ENCODE measurements at regions of chr10 and their contacts with region 1.

Region 1: DNA sequence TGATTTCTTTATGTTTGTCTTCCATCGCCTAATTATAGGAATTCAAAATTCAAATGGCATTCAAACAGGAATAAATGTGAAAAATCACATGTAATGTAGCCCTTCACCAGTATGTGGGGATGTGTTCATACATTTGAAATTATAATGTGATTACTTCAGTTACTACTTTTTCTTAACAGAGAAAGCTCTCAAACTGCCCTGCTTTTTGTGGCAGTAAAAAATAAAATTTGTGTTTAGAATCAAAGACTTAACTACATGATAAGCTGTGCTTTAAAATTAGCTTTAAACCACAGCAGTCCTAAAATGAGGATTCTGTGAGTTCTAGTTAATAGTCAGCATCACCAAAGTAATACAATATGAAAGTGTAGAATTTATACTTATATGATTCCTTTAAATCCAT is 7.8 kb upstream of the HERC4 start:
- DNase-seq: no peak
- H3K4me3 ChIP-seq: no peak overlapping the region
- H3K27ac ChIP-seq: no peak overlapping the region
- H3K4me1 ChIP-seq: no peaks in the 10 kb centered on the region
- H3K27me3 ChIP-seq: no peaks in the 10 kb centered on the region
- CTCF ChIP-seq: peak in 2 of 4 experiments; percentile 24 to 25
- EP300 ChIP-seq: no peak
- POLR2A ChIP-seq: no peak

Region 2: GRCh38 chr10:68156373-68157185 is 73.7 kb after region 1 on chr10:
- intact Hi-C with region 1: loop called (anchors 5 kb)
- DNase-seq: peak; percentile 70
- H3K4me3 ChIP-seq: no peak overlapping the region
- H3K27ac ChIP-seq: no peak overlapping the region
- H3K4me1 ChIP-seq: peaks cover 0 to 19% (median 13%) of the 10 kb centered on the region in 4 donors
- H3K27me3 ChIP-seq: no peaks in the 10 kb centered on the region
- CTCF ChIP-seq: peak in 3 of 4 experiments; percentile 67 to 77 (median 69)
- EP300 ChIP-seq: no peak
- POLR2A ChIP-seq: no peak

Region 3: GRCh38 chr10:68861253-68861652 is 778.4 kb after region 1 on chr10:
- intact Hi-C with region 1: no loop called
- DNase-seq: no peak
- H3K4me3 ChIP-seq: no peak overlapping the region
- H3K27ac ChIP-seq: no peak overlapping the region
- H3K4me1 ChIP-seq: peaks cover 0 to 8% (median 0%) of the 10 kb centered on the region in 4 donors
- H3K27me3 ChIP-seq: no peaks in the 10 kb centered on the region
- CTCF ChIP-seq: no peak
- EP300 ChIP-seq: no peak
- POLR2A ChIP-seq: no peak

Measured in sigmoid colon (tissue), 7 donors.